ENCODE measurements at regions of chr11 and their contacts with region 1.

Region 1: GRCh38 chr11:83317757-83318690 is 31.9 kb upstream of the CCDC90B start:
- DNase-seq: no peak
- H3K4me3 ChIP-seq: no peak overlapping the region
- H3K27ac ChIP-seq: no peak overlapping the region
- H3K4me1 ChIP-seq: no peaks in the 10 kb centered on the region
- H3K27me3 ChIP-seq: no peaks in the 10 kb centered on the region
- CTCF ChIP-seq: no peak
- EP300 ChIP-seq: no peak
- POLR2A ChIP-seq: no peak

Region 2: GRCh38 chr11:83292709-83293456 is 25.1 kb before region 1 on chr11:
- in situ Hi-C with region 1: no loop called
- intact Hi-C with region 1: loop called (anchors 1 kb)
- DNase-seq: no peak
- H3K4me3 ChIP-seq: no peak overlapping the region
- H3K27ac ChIP-seq: no peak overlapping the region
- H3K4me1 ChIP-seq: no peaks in the 10 kb centered on the region
- H3K27me3 ChIP-seq: no peaks in the 10 kb centered on the region
- CTCF ChIP-seq: peak; percentile 52 to 66 (median 63)
- EP300 ChIP-seq: no peak
- POLR2A ChIP-seq: no peak